ENCODE measurements at regions of chr5 and their contacts with region 1.

Region 1: DNA sequence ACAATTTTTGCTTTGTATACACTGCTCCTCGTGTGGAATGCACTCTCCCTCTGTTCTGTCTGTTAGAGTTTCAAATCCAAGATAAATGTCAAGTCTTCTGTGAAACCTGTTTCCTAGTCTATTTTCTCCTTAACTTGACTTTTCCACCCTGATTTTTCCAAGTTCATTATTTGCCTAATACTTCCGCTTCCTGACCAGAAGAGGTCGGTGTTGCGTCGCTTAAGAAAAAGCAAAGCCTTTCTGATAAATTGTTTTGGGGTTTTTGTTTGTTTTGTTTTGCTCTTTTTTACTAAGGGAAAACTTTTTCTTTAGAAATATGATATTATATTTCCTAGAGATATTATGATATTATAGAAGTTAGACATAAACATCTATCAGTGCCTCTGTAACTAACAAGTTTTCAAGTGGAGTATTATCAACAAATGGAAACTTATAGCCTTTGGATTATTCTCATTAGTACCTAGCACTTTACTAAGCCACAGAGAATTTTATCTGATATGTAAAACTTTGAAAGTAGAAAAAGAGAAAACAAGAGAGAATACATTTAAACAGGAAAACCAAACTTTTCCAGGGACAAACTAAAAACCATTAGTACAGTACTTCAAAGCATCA is 55.8 kb downstream of the PHAX start:
- DNase-seq: peak; percentile 31
- ATAC-seq: no peak
- H3K4me3 ChIP-seq: no peak overlapping the region
- H3K27ac ChIP-seq: no peak overlapping the region
- H3K4me1 ChIP-seq: no peaks in the 10 kb centered on the region
- H3K27me3 ChIP-seq: no peaks in the 10 kb centered on the region
- CTCF ChIP-seq: peak; percentile 83 to 87 (median 86)
- POLR2A ChIP-seq: no peak
- RAD21 ChIP-seq: peak; percentile 92

Region 2: DNA sequence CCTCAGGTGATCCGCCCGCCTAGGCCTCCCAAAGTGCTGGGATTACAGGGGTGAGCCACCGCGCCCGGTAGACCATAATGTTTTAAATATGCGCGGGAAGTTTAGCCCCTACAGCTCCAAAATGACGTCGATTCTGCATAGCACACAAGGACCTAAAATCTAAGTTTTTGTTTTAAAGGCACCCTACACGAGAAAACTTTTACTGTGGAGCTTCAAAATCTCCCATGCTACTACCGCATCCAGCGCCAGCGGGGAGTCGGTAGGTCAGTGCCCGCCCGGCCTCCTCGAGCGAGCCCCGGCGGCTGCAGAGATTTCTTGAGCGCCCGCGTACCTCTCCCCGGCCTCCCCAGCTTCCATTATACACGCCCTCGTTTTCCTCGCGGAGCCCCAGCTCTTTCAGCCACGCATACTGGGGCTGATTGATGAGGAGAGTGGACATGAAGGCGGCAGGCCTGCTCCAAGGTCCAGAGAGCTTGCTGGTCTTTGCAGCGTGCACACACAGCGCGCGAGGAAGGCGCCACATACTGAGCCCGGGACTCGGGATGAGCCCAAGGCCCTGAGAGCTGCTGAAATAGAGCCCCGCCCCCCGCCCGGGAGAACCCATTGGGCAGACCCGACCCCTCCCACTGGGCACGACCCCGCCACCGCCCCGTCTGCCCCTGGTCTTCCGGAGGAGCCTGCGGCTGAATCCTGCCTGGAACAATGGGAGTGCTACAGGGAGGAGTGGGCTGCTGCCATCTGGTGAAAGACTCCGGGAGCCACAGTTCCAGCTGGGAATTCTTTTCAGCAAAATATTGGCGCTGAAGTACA is 61.6 kb before region 1 on chr5 and contains the start of gene ALDH7A1:
- CTCF ChIA-PET with region 1: no interaction called
- POLR2A ChIA-PET with region 1: no interaction called
- RAD21 ChIA-PET with region 1: no interaction called
- intact Hi-C with region 1: no loop called
- DNase-seq: peak; percentile 83
- ATAC-seq: peak; percentile 94
- H3K4me3 ChIP-seq: peak within 1 kb of the TSS; percentile 73 to 86
- H3K27ac ChIP-seq: peak within 1 kb of the TSS; percentile 67
- H3K4me1 ChIP-seq: peaks cover 0 to 18% of the 10 kb centered on the region in 2 experiments; a peak in 3 of 4 replicates
- H3K27me3 ChIP-seq: no peaks in the 10 kb centered on the region
- CTCF ChIP-seq: peak; percentile 42 to 82 (median 51)
- POLR2A ChIP-seq: peak; percentile 91
- RAD21 ChIP-seq: peak; percentile 74
- total RNA-seq, gene ALDH7A1: 93.2 TPM

Region 3: DNA sequence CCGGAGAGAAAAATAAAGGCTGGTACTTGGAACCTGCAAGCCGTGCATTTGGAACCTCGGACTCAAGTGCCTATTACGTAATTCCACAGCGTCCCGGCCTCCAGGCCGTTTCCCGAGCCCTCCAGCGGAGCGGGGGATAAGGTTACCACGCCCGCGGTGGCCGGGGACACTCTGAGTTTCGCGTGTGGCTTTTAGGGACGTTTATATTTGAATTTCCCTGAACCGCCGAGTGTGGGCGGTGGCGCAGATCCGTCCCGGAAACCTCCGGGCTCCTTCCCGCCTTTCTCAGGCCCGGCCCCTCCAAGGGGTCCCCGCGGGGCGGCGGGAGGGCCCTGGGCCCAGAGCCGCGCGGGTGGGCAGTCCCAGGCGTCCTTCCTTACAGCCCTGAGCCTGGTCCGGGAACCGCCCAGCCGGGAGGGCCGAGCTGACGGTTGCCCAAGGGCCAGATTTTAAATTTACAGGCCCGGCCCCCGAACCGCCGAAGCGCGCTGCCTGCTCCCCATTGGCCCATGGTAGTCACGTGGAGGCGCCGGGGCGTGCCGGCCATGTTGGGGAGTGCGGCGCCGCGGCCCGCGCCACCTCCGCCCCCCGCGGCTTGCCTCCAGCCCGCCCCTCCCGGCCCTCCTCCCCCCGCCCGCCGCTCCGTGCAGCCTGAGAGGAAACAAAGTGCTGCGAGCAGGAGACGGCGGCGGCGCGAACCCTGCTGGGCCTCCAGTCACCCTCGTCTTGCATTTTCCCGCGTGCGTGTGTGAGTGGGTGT is 120.2 kb after region 1 on chr5 and contains the start of gene LMNB1:
- CTCF ChIA-PET with region 1: interaction called, 4 read pairs
- POLR2A ChIA-PET with region 1: interaction called, 3 read pairs
- RAD21 ChIA-PET with region 1: no interaction called
- intact Hi-C with region 1: loop called (anchors 1 kb)
- DNase-seq: peak; percentile 93
- ATAC-seq: peak; percentile 84
- H3K4me3 ChIP-seq: peak within 1 kb of the TSS; percentile 74 to 98
- H3K27ac ChIP-seq: peak within 1 kb of the TSS; percentile 100
- H3K4me1 ChIP-seq: peaks cover 13 to 32% of the 10 kb centered on the region in 2 experiments
- H3K27me3 ChIP-seq: no peaks in the 10 kb centered on the region
- CTCF ChIP-seq: no peak
- POLR2A ChIP-seq: no peak
- RAD21 ChIP-seq: peak; percentile 4; the same call in 1 of the 2 replicates
- total RNA-seq, gene LMNB1: 150 TPM

Region 4: GRCh38 chr5:127040796-127041520 is 384.5 kb after region 1 on chr5:
- CTCF ChIA-PET with region 1: no interaction called
- POLR2A ChIA-PET with region 1: no interaction called
- RAD21 ChIA-PET with region 1: no interaction called
- intact Hi-C with region 1: loop called (anchors 10 kb)
- DNase-seq: no peak
- ATAC-seq: 0 out of 2 replicates have a peak, but pooled peaks have one; percentile 17
- H3K4me3 ChIP-seq: no peak overlapping the region
- H3K27ac ChIP-seq: no peak overlapping the region
- H3K4me1 ChIP-seq: peaks cover 0 to 9% of the 10 kb centered on the region in 2 experiments; a peak in 1 of 4 replicates
- H3K27me3 ChIP-seq: no peaks in the 10 kb centered on the region
- CTCF ChIP-seq: no peak
- POLR2A ChIP-seq: no peak
- RAD21 ChIP-seq: no peak

Region 5: DNA sequence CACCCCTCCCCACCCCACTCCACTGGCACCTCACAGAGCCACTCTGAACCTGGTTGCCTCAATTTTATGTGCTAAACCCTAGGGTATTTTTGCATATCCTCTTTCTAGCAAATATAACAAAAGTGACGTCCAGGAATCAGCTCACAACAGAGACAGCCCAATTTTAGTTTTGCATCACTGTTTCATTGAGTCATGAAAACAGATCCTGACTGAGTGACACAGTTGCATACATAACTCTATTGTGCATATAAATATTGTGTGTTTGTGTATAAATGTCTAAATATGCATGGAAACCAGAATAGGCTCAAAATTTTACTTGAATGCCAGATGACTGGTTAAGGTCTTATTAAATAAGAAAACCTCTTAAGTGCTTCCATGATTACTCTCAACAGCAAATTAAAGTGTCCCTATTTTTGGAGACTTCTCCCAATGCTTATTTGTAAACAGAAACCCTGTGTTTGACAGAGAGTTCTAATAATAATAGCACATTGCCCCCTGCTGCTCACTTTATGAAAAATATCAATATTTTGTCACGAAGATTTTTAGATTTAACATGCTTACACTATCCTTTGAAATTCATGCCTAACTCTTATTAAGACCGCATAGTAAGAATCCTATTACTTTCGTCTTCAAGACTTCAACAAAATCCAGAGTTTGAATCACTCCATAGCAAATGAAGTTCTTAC is 785.4 kb after region 1 on chr5:
- CTCF ChIA-PET with region 1: no interaction called
- POLR2A ChIA-PET with region 1: no interaction called
- RAD21 ChIA-PET with region 1: no interaction called
- intact Hi-C with region 1: loop called (anchors 5 kb)
- DNase-seq: no peak
- ATAC-seq: peak; percentile 32; the same call in 1 of the 2 replicates
- H3K4me3 ChIP-seq: no peak overlapping the region
- H3K27ac ChIP-seq: no peak overlapping the region
- H3K4me1 ChIP-seq: no peaks in the 10 kb centered on the region
- H3K27me3 ChIP-seq: no peaks in the 10 kb centered on the region
- CTCF ChIP-seq: peak; percentile 25 to 59 (median 42); a peak in 4 of 6 replicates
- POLR2A ChIP-seq: no peak
- RAD21 ChIP-seq: peak; percentile 65

Region 6: GRCh38 chr5:128135286-128135685 is 1478.8 kb after region 1 on chr5:
- CTCF ChIA-PET with region 1: no interaction called
- POLR2A ChIA-PET with region 1: no interaction called
- RAD21 ChIA-PET with region 1: no interaction called
- intact Hi-C with region 1: no loop called
- DNase-seq: no peak
- ATAC-seq: no peak
- H3K4me3 ChIP-seq: no peak overlapping the region
- H3K27ac ChIP-seq: no peak overlapping the region
- H3K4me1 ChIP-seq: no peaks in the 10 kb centered on the region
- H3K27me3 ChIP-seq: no peaks in the 10 kb centered on the region
- CTCF ChIP-seq: no peak
- POLR2A ChIP-seq: no peak
- RAD21 ChIP-seq: no peak